Prostate gland (tissue), 2 donors: ENCODE measurements at regions of chr22 and their contacts with region 1.

Region 1: DNA sequence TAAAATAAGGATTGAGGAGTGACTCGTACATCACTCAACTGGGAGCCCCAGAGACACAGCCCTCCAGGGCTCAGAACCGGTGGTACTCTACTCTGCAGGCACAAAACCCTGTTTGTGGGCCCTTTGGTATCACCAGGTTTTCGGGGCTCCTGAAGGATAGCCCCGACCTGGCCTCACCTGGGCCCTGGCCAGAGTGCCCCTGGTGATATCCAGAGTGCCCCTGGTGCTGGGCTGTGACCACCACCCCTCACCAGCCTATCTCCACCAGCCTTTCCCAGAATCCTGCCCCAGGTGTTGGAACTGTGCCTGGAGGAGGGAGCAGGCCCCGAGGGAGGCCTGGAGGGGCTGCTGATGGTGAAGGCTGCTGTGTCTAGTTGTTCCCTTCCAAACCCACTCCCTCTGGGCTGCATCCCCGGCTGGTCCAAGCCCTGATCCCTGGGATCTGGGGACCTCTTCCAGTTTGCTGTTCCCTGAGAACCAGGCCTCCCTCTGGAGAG is 2.2 kb upstream of the GGT5 start:
- DNase-seq: no peak
- H3K4me3 ChIP-seq: no peak overlapping the region
- H3K27ac ChIP-seq: peak overlapping the region; percentile 75 to 77
- H3K4me1 ChIP-seq: peaks cover 6% of the 10 kb centered on the region
- H3K27me3 ChIP-seq: no peaks in the 10 kb centered on the region
- CTCF ChIP-seq: no peak
- POLR2A ChIP-seq: no peak

Region 2: DNA sequence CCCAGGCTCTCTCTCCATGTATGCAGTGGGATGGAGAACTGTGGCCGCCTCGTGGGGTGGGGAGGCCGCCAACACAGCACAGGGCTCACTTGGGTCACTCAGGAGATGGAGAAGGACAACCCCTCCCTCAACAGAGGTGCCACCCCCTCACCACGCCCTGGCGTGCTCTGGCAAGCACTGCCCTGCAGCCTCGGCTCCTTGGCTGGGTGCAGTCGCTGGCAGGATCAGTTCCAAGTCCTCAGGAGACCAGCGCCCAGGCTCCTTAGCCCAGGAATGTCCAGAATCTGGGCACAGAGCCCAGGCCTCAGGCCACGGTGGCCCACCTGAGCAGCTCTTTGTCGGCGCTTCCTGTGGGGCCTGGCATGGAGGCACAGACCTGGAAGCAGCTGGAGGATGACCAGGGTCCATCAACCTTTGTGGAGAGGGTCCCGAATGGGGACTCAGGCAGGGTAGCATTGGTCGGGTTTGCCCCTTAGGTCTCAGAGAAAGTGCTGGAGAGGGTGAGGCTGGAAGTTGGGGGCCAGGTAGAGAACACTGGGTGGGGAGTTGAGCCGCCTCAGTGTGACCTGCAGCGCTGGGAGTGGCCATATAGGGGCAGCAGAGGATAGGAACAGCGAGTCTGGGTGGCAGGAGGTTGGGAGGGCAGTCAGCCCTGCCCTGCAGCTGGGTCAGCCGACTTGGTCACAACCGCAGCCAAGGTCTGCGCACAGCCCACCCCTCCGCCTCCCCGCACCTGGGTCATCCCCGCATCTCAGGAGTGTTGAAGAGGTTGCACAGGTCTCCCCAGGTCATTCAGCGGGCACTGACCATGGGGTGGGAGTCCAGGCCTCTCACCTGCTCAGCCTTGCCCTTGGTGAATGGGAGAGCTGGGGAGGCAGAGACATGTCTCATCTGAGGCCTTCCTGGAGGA is 57.6 kb before region 1 on chr22:
- intact Hi-C with region 1: loop called (anchors 1 kb)
- DNase-seq: peak; percentile 65
- H3K4me3 ChIP-seq: no peak overlapping the region
- H3K27ac ChIP-seq: peak overlapping the region in 1 of 2 donors; percentile 42
- H3K4me1 ChIP-seq: peaks cover 10% of the 10 kb centered on the region
- H3K27me3 ChIP-seq: no peaks in the 10 kb centered on the region
- CTCF ChIP-seq: peak; percentile 83 to 97 (median 90)
- POLR2A ChIP-seq: no peak